ENCODE measurements at regions of chr6 and their contacts with region 1.

Region 1: GRCh38 chr6:80214436-80215022 is 108.1 kb downstream of the BCKDHB start:
- DNase-seq: peak; percentile 28
- H3K4me3 ChIP-seq: no peak overlapping the region
- H3K27ac ChIP-seq: no peak overlapping the region
- H3K4me1 ChIP-seq: no peaks in the 10 kb centered on the region
- H3K27me3 ChIP-seq: no peaks in the 10 kb centered on the region
- CTCF ChIP-seq: peak; percentile 78 to 83

Region 2: DNA sequence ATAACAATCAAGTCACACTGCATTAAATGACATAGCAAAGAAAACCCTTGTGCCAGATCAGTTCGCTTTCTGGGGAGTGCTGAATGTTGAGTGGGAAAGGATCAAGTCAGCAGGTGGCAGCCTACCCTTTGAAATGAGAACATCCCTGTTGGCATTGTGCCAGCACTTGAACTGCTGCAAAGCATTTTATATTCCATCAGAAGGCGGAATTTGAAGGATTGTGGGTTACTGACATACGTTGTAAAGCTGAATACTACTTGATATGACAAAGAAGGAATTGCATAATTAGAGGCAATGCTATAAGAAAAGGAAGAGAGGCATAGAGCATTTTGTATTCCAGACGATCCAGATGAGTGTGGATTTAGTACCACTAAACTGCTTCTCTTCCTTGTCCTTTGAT is 81.5 kb before region 1 on chr6:
- CTCF ChIA-PET with region 1: no interaction called
- dilution Hi-C with region 1: no loop called
- in situ Hi-C with region 1: no loop called
- intact Hi-C with region 1: loop called (anchors 2 kb)
- DNase-seq: peak; percentile 41
- H3K4me3 ChIP-seq: no peak overlapping the region
- H3K27ac ChIP-seq: no peak overlapping the region
- H3K4me1 ChIP-seq: peaks cover 9% of the 10 kb centered on the region
- H3K27me3 ChIP-seq: no peaks in the 10 kb centered on the region
- CTCF ChIP-seq: peak; percentile 64

Region 3: GRCh38 chr6:80325742-80326141 is 111.2 kb after region 1 on chr6:
- CTCF ChIA-PET with region 1: no interaction called
- dilution Hi-C with region 1: no loop called
- in situ Hi-C with region 1: no loop called
- intact Hi-C with region 1: loop called (anchors 5 kb)
- DNase-seq: no peak
- H3K4me3 ChIP-seq: no peak overlapping the region
- H3K27ac ChIP-seq: no peak overlapping the region
- H3K4me1 ChIP-seq: no peaks in the 10 kb centered on the region
- H3K27me3 ChIP-seq: no peaks in the 10 kb centered on the region
- CTCF ChIP-seq: no peak

Region 4: GRCh38 chr6:80480421-80481157 is 266.1 kb after region 1 on chr6:
- CTCF ChIA-PET with region 1: no interaction called
- dilution Hi-C with region 1: no loop called
- in situ Hi-C with region 1: no loop called
- intact Hi-C with region 1: loop called (anchors 10 kb)
- DNase-seq: no peak
- H3K4me3 ChIP-seq: no peak overlapping the region
- H3K27ac ChIP-seq: no peak overlapping the region
- H3K4me1 ChIP-seq: no peaks in the 10 kb centered on the region
- H3K27me3 ChIP-seq: no peaks in the 10 kb centered on the region
- CTCF ChIP-seq: no peak

Region 5: GRCh38 chr6:80605165-80605989 is 390.8 kb after region 1 on chr6:
- CTCF ChIA-PET with region 1: no interaction called
- dilution Hi-C with region 1: no loop called
- in situ Hi-C with region 1: no loop called
- intact Hi-C with region 1: loop called (anchors 1 kb)
- DNase-seq: peak; percentile 57
- H3K4me3 ChIP-seq: no peak overlapping the region
- H3K27ac ChIP-seq: peak overlapping the region; percentile 12
- H3K4me1 ChIP-seq: peaks cover 26% of the 10 kb centered on the region
- H3K27me3 ChIP-seq: no peaks in the 10 kb centered on the region
- CTCF ChIP-seq: peak; percentile 52 to 63

Region 6: GRCh38 chr6:80733641-80734040 is 519.1 kb after region 1 on chr6:
- CTCF ChIA-PET with region 1: no interaction called
- dilution Hi-C with region 1: no loop called
- in situ Hi-C with region 1: no loop called
- intact Hi-C with region 1: loop called (anchors 10 kb)
- DNase-seq: no peak
- H3K4me3 ChIP-seq: no peak overlapping the region
- H3K27ac ChIP-seq: no peak overlapping the region
- H3K4me1 ChIP-seq: no peaks in the 10 kb centered on the region
- H3K27me3 ChIP-seq: no peaks in the 10 kb centered on the region
- CTCF ChIP-seq: no peak

Region 7: GRCh38 chr6:81465859-81466258 is 1251.3 kb after region 1 on chr6:
- CTCF ChIA-PET with region 1: no interaction called
- dilution Hi-C with region 1: no loop called
- in situ Hi-C with region 1: no loop called
- intact Hi-C with region 1: loop called (anchors 5 kb)
- DNase-seq: peak; percentile 4
- H3K4me3 ChIP-seq: no peak overlapping the region
- H3K27ac ChIP-seq: no peak overlapping the region
- H3K4me1 ChIP-seq: no peaks in the 10 kb centered on the region
- H3K27me3 ChIP-seq: no peaks in the 10 kb centered on the region
- CTCF ChIP-seq: peak; percentile 54 to 61

Measured in mammary epithelial cell (primary cell).